HepG2 (cell line): ENCODE measurements at regions of chr3 and their contacts with region 1.

Region 1: GRCh38 chr3:160941885-160942494 is 163.2 kb downstream of the B3GALNT1 start:
- DNase-seq: peak; percentile 61
- ATAC-seq: peak; percentile 79
- H3K4me3 ChIP-seq: no peak overlapping the region
- H3K27ac ChIP-seq: no peak overlapping the region
- H3K4me1 ChIP-seq: no peaks in the 10 kb centered on the region
- H3K27me3 ChIP-seq: no peaks in the 10 kb centered on the region
- CTCF ChIP-seq: peak; percentile 78
- EP300 ChIP-seq: no peak
- POLR2A ChIP-seq: no peak
- RAD21 ChIP-seq: peak; percentile 32; the same call in 1 of the 2 replicates

Region 2: GRCh38 chr3:160577556-160578195 is 364.3 kb before region 1 on chr3:
- CTCF ChIA-PET with region 1: no interaction called
- POLR2A ChIA-PET with region 1: no interaction called
- in situ Hi-C with region 1: no loop called
- intact Hi-C with region 1: loop called (anchors 5 kb)
- DNase-seq: peak; percentile 12
- ATAC-seq: peak; percentile 82
- H3K4me3 ChIP-seq: no peak overlapping the region
- H3K27ac ChIP-seq: no peak overlapping the region
- H3K4me1 ChIP-seq: 0 out of 2 replicates have a peak, but pooled peaks cover 6% of the 10 kb centered on the region
- H3K27me3 ChIP-seq: peaks cover 0 to 10% of the 10 kb centered on the region in 2 experiments; a peak in 1 of 5 replicates
- CTCF ChIP-seq: peak; percentile 60
- EP300 ChIP-seq: no peak
- POLR2A ChIP-seq: no peak
- RAD21 ChIP-seq: no peak

Region 3: DNA sequence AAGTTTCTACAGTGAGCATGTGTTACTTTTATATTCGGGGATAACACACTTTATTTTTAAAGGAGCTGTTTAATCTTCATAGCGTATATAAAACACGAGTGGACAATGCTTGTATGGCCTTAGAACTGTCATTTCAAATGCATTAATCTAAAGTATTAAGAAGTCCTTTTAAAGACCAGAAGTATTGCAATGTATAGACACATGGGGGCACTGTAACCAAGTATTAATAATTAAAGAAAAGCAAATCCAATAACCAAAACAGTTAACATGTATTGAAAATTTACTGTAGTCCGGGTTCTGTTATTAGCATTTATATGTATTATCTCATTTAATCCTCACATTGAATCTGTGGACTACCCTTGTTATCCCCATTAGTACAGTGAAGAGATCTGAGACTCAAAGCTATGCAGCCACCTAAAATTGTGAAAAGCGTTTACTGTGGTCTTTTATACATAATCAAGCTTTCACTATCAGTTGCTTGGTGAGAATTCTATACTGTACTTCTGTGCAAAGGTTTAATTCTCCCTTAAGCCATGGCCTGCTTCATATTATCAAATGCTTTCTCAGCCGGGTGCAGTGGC is 254.9 kb before region 1 on chr3:
- CTCF ChIA-PET with region 1: interaction called, 11 read pairs
- POLR2A ChIA-PET with region 1: no interaction called
- in situ Hi-C with region 1: no loop called
- intact Hi-C with region 1: loop called (anchors 1 kb)
- DNase-seq: peak; percentile 6
- ATAC-seq: no peak
- H3K4me3 ChIP-seq: no peak overlapping the region
- H3K27ac ChIP-seq: no peak overlapping the region
- H3K4me1 ChIP-seq: no peaks in the 10 kb centered on the region
- H3K27me3 ChIP-seq: no peaks in the 10 kb centered on the region; a peak in 1 of 5 replicates
- CTCF ChIP-seq: 0 out of 2 replicates have a peak, but pooled peaks have one; percentile 9
- EP300 ChIP-seq: no peak
- POLR2A ChIP-seq: no peak
- RAD21 ChIP-seq: no peak

Region 4: DNA sequence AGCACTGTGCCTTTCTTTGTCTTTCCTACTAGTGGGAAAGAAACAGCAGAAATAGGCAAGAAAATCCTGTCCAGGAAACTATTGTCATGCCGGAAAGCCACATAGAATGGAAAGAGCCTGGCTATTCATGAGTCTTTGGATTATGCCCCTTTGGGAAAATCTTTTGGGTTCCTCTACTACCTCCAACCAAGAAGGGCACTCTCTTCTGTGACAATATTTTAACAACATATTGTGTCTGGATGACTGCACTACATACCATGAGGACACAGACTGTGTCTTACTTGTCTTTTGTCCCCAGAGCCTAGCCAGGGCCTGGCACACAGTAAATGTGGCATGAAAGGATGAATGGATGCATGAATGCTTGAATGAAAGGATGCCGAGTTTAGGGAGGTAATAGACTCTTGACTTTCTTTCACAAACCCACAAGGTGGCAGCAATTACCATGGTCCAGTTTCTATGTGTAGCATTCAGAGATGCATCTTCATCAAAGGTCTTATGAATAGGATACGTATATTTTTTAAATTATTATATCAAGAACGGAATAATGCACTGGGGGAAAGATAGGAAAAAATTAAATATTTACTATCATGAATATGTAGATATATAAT is 234.7 kb before region 1 on chr3:
- CTCF ChIA-PET with region 1: interaction called, 15 read pairs
- POLR2A ChIA-PET with region 1: no interaction called
- in situ Hi-C with region 1: loop called (anchors 10 kb)
- intact Hi-C with region 1: loop called (anchors 1 kb)
- DNase-seq: peak; percentile 38
- ATAC-seq: peak; percentile 70
- H3K4me3 ChIP-seq: no peak overlapping the region
- H3K27ac ChIP-seq: no peak overlapping the region
- H3K4me1 ChIP-seq: no peaks in the 10 kb centered on the region
- H3K27me3 ChIP-seq: no peaks in the 10 kb centered on the region
- CTCF ChIP-seq: peak; percentile 53
- EP300 ChIP-seq: no peak
- POLR2A ChIP-seq: no peak
- RAD21 ChIP-seq: no peak

Region 5: GRCh38 chr3:160851629-160852210 is 90.3 kb before region 1 on chr3:
- CTCF ChIA-PET with region 1: no interaction called
- POLR2A ChIA-PET with region 1: no interaction called
- in situ Hi-C with region 1: no loop called
- intact Hi-C with region 1: no loop called
- DNase-seq: no peak
- ATAC-seq: no peak
- H3K4me3 ChIP-seq: no peak overlapping the region
- H3K27ac ChIP-seq: no peak overlapping the region
- H3K4me1 ChIP-seq: no peaks in the 10 kb centered on the region
- H3K27me3 ChIP-seq: no peaks in the 10 kb centered on the region; a peak in 1 of 5 replicates
- CTCF ChIP-seq: no peak
- EP300 ChIP-seq: no peak
- POLR2A ChIP-seq: no peak
- RAD21 ChIP-seq: no peak

Region 6: DNA sequence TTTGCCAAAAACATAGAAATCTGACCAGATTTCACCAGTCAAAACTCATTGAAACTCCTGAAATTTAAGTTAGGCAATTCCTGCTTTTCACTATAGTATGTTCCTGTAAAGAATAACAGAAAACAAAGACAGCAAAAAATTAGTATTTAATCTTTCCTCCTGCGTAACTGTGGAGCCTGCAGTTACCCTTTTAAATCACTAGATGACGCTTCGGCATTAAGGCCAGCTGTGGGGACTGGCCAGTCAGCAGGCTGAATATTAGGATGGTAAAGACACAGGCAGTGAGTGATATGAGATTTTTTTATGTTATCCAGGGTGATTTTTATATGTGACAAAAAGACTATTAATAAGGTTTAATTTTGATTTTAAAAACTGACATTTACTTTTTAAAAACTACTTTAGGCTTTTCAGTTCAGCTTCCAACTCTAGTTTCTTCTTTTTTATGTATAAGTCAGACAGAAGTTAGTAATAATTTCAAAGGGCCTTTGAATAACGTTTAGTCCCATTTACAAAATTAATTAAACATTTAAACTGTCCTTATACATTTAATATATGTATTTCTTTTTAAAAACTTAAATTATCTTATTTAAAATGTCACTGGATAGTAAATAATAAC is 20.9 kb before region 1 on chr3:
- CTCF ChIA-PET with region 1: interaction called, 21 read pairs
- POLR2A ChIA-PET with region 1: no interaction called
- in situ Hi-C with region 1: no loop called
- intact Hi-C with region 1: loop called (anchors 1 kb)
- DNase-seq: peak; percentile 30
- ATAC-seq: peak; percentile 96
- H3K4me3 ChIP-seq: no peak overlapping the region
- H3K27ac ChIP-seq: no peak overlapping the region
- H3K4me1 ChIP-seq: no peaks in the 10 kb centered on the region
- H3K27me3 ChIP-seq: no peaks in the 10 kb centered on the region
- CTCF ChIP-seq: peak; percentile 84
- EP300 ChIP-seq: no peak
- POLR2A ChIP-seq: no peak
- RAD21 ChIP-seq: peak; percentile 55

Region 7: DNA sequence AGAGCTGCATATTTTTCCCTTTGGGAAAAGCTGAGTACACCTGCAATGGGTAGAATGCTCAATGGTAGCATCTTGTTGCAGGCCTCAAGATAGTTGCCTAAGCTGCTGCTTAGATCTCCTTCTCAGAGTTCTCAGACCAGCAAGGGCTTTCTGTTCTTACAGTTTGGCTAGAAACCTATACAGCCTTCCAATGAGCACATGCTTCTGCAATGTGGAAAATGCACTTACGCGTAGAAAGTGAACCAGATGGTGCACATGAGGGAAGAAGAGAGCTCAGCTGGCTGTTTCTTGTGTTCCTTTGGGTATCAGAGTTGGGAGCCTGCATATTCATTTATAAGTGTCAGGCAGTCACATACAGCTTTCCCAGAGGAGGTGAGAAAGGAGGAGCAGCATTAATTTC is 26.8 kb after region 1 on chr3:
- CTCF ChIA-PET with region 1: no interaction called
- POLR2A ChIA-PET with region 1: no interaction called
- in situ Hi-C with region 1: no loop called
- intact Hi-C with region 1: no loop called
- DNase-seq: no peak
- ATAC-seq: no peak
- H3K4me3 ChIP-seq: no peak overlapping the region
- H3K27ac ChIP-seq: no peak overlapping the region
- H3K4me1 ChIP-seq: no peaks in the 10 kb centered on the region
- H3K27me3 ChIP-seq: no peaks in the 10 kb centered on the region
- CTCF ChIP-seq: no peak
- EP300 ChIP-seq: no peak
- POLR2A ChIP-seq: no peak
- RAD21 ChIP-seq: no peak

Region 8: DNA sequence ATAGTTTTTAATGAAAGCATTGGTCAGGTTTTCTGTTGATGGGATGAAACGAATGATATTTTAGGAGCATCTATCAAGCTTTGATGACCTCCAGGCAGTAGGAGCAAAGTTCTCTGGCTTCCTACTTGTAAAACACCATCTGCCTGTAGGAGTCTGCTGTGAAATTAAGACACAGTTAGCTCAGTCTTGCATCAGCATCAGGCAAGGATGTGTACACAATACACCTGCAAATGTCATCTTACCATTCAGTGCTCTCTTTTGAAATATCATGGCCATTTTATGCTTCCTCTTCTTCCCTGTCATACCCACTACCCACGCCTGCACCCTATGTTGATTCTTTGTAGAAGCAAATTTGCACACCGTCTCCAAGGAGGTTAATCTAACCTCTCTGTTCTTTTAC is 124.9 kb after region 1 on chr3:
- CTCF ChIA-PET with region 1: no interaction called
- POLR2A ChIA-PET with region 1: no interaction called
- in situ Hi-C with region 1: no loop called
- intact Hi-C with region 1: no loop called
- DNase-seq: no peak
- ATAC-seq: no peak
- H3K4me3 ChIP-seq: no peak overlapping the region
- H3K27ac ChIP-seq: no peak overlapping the region
- H3K4me1 ChIP-seq: no peaks in the 10 kb centered on the region
- H3K27me3 ChIP-seq: no peaks in the 10 kb centered on the region
- CTCF ChIP-seq: no peak
- EP300 ChIP-seq: no peak
- POLR2A ChIP-seq: no peak
- RAD21 ChIP-seq: no peak